Motor neuron (in vitro differentiated cells): ENCODE measurements at regions of chr17 and their contacts with region 1.

Region 1: GRCh38 chr17:55845385-55845784 is 94.5 kb downstream of the PCTP start:
- ATAC-seq: peak; percentile 70 to 99 (median 88)
- H3K4me3 ChIP-seq: peak overlapping the region; percentile 11 to 26 (median 15)
- H3K27ac ChIP-seq: no peak overlapping the region
- H3K4me1 ChIP-seq: peaks cover 0 to 6% of the 10 kb centered on the region in 2 donors

Region 2: DNA sequence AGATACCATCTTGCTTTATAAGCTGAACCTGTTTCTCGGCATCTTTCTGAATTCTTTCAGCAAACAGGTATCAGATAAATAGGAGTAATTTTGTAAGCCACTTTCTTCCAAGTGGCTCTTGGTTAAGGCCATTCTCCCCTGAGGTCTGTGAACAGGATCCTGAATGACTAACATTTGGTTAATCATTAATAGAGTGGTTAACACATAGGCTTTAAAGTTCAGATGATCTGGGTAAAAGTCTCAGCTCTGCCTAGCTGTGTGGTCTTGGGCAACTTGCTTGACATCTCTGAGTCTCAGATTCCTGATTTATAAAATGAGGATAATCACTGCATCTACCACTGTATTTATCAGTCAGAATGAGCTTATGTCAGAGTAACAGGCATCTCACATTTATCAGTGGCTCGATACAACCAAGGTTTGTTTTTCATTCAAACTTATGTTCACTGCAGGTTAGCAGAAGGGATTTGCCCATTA is 263.5 kb after region 1 on chr17:
- in situ Hi-C with region 1: loop called in 1 of 9 experiments (anchors 25 kb)
- ATAC-seq: no peak
- H3K4me3 ChIP-seq: no peak overlapping the region
- H3K27ac ChIP-seq: no peak overlapping the region
- H3K4me1 ChIP-seq: no peaks in the 10 kb centered on the region

Region 3: DNA sequence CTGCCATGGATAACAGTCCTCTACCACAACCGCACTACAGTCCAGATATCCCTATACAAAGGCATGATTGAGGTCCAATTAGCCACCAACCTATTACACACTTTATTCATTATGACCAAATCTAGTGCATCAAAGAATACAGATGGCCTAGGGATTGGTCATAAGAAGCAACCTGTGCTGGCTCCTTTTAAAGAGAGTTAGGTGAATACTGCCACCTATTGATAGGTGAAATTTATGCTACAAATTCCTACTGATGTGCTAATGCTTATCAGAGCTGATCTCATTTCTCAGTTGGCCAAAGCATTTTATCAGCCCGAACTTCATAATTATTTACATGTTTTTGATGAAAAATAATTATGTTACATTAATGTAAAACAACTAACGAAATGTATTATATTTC is 474.1 kb after region 1 on chr17:
- in situ Hi-C with region 1: loop called in 1 of 9 experiments (anchors 10 kb)
- ATAC-seq: peak; percentile 42 to 87 (median 59)
- H3K4me3 ChIP-seq: no peak overlapping the region
- H3K27ac ChIP-seq: no peak overlapping the region
- H3K4me1 ChIP-seq: peaks cover 3 to 13% of the 10 kb centered on the region in 2 donors

Region 4: GRCh38 chr17:56451629-56452028 is 606.2 kb after region 1 on chr17:
- in situ Hi-C with region 1: loop called in 1 of 9 experiments (anchors 25 kb)
- ATAC-seq: no peak
- H3K4me3 ChIP-seq: no peak overlapping the region
- H3K27ac ChIP-seq: no peak overlapping the region
- H3K4me1 ChIP-seq: no peaks in the 10 kb centered on the region

Region 5: DNA sequence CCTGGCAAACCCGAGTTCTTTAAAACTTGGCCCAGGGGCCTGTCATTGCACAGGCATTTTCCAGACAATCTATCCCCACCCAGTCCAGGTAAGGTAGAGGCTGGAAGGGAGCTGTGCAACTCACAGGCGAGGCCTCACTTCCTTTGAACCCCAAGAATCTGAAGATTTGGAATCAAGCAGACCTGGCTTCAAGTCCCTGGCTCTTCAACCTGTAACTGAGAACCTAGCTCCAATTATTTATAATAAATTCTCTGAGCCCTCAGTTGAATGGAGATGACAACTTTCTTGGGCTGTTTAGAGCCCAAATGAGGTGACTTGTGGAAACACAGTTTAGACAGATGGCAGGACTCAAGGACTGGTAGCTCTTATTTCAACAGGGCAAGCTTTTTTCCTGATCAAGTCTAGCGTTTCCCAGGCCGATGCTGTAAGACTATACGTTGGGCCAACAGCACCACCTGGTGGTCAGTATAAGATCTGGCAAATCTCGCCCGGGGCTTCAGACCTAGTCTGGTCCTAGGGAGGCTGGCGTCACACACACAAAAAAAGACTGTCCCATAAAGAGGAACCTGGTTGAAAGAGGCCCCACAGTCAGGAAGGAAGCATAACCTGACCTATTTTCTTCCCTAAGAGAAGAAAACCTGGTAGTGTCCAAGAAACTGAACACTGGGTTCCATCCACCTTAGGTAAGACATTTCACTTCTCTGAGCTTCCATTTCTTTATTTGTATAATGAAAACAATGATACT is 870.4 kb after region 1 on chr17:
- in situ Hi-C with region 1: loop called in 1 of 9 experiments (anchors 25 kb)
- ATAC-seq: peak; percentile 90 to 100 (median 96)
- H3K4me3 ChIP-seq: no peak overlapping the region
- H3K27ac ChIP-seq: no peak overlapping the region
- H3K4me1 ChIP-seq: no peaks in the 10 kb centered on the region